ENCODE measurements at regions of chr2 and their contacts with region 1.

Region 1: GRCh38 chr2:134245340-134245984 is 8.4 kb upstream of the MGAT5 start:
- DNase-seq: no peak
- CTCF ChIP-seq: peak; percentile 72

Region 2: GRCh38 chr2:134011936-134012586 is 233.4 kb before region 1 on chr2:
- CTCF ChIA-PET with region 1: no interaction called
- POLR2A ChIA-PET with region 1: no interaction called
- DNase-seq: no peak
- CTCF ChIP-seq: no peak

Region 3: GRCh38 chr2:134098321-134098720 is 147.1 kb before region 1 on chr2:
- CTCF ChIA-PET with region 1: no interaction called
- POLR2A ChIA-PET with region 1: no interaction called
- DNase-seq: no peak
- CTCF ChIP-seq: no peak

Region 4: DNA sequence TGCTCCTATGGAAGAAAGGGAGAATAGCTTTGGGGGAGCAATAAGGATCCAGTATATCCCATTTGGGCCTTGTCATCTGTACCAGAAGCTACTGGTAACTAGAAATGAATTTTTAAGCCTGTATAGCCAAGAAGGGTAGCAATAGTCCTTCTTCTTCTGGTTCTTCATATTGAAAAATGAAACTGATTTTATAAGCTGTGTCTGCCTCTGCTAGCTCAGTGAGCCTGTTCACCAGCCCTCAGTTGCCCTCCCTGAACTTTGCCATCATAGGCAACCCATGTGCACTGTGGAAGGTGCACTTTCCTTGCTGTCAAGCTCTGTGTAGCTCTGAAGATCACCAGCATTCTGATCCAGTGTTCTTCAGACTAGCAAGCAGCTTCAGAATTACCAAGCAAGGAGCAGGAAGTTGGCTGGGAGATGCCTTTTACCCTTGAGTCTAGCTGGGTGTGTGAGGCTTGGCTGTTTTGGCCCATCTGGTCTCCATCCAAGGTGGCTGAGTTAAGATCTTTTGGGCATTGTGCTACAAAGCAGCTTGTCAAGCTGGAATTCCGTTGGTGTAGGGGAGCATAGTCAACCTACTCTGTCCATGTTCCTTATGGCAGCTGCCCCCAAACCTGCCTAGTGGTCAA is 47.3 kb before region 1 on chr2:
- CTCF ChIA-PET with region 1: interaction called, 35 read pairs
- POLR2A ChIA-PET with region 1: no interaction called
- DNase-seq: no peak
- CTCF ChIP-seq: no peak

Region 5: DNA sequence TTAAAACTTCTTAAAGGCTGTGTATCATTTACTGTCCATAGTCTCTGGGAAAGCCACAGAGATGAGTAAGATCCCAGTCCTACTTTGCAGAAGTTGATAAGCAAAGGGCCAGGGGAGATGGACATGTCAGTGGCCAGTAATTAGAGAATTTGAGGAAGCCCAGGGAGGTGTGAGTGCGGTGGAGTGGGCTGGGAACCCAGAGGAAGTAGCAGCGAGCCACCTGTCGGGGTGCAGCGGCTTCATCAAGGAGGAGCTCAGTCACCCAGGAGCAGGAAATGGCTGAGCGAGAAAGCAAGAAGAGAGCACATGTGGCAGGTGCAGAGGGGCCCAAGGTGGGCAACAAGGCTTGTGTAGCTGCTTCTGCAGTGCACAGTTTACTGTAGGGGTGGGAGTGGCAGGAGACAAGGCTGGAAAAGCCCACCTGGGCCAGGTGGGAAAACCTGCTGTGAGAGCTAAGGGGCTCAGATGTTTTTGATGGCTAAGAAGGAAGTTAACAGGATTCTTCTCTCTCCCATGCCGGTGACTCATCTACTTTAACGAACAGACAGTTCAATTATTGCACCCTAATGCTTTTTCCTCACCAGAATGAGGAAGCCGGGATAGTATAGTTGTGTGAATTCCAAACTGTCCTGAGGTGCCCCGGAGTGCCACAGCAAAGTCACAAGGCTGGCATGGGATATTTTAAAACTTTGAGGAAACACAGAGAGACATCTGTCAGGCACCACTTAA is 26.4 kb before region 1 on chr2:
- CTCF ChIA-PET with region 1: interaction called, 126 read pairs
- POLR2A ChIA-PET with region 1: no interaction called
- DNase-seq: no peak
- CTCF ChIP-seq: no peak

Region 6: DNA sequence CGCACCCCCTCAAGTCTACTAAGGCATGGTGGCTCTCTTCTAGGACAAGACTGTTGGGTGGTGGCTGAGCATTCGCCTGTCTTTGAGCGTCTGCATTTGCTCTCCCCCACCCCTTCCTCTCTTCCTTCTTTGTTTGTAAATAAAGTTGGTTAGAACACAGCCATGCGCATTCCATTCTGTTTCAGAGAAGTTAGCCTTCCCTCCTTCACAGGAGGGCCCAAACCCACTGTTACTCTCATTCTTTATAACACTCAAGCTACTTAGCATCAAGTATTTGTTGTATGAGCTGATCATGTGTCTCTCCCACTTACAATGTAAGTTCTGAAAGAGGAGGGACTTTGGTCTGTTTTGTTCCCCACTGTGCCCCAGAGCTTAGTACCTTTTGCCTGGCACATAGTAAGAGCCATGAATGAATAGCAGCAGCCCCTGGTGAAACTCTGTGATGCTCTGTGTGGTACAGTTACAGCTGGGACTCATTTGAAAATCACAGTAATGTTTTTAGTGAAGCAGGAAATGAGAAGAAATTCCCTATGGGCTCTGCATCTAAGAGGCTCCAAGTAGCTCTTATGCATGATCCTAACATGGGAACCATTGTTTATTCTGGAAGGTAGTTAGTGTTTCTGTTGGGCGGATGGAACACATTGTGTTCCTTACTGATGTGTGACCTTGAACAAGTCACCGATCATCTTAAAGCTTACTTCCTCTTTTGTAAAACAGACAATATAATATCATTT is 16.1 kb after region 1 on chr2:
- CTCF ChIA-PET with region 1: interaction called, 20 read pairs
- POLR2A ChIA-PET with region 1: no interaction called
- DNase-seq: no peak
- CTCF ChIP-seq: no peak

Measured in GM10248 (cell line).